WTC11 (cell line): ENCODE measurements at regions of chr10 and their contacts with region 1.

Region 1: GRCh38 chr10:71708301-71708703 is 11.3 kb downstream of the C10orf105 start:
- DNase-seq: peak; percentile 92
- ATAC-seq: peak; percentile 94
- H3K4me3 Mint-ChIP-seq: no peak overlapping the region; the same call in 1 of the 2 replicates
- H3K27ac Mint-ChIP-seq: no peak overlapping the region
- H3K4me1 Mint-ChIP-seq: peaks cover 4% of the 10 kb centered on the region
- H3K27me3 Mint-ChIP-seq: no peaks in the 10 kb centered on the region; the same call in 1 of the 2 replicates
- CTCF ChIP-seq: peak; percentile 84

Region 2: DNA sequence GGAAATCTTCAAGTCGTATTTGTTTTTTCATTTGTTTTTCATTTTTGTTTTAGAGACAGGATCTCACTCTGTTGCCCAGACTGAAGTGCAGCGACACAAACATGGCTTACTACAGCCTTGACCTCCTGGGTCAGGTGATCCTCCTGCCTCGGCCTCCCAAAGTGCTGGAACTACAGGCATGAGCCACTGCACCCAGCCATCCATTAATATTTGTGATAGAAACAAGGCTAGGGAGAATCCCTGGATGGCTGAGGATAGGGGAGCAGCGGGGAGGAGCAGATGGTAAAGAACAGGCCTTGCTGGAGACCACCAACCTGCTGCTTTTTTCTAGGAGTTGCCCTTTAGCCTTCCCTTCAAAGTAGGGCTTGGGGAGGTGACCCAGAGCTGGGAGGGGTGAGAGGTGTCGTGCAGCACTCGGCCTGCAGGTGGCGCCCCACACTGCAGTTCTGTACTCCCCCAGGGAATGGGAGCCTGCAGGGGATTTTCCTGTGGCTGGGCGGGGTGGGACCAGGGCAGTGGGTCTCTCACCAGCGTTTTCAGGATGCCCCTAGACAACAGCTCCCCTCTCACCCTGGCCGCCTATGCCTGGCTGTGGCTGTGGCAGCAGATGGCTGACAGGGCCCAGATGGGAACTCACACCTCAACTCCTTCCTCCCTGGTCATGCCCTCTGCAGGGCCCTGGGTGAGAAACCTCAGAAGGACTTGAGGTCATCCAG is 324.2 kb before region 1 on chr10:
- CTCF ChIA-PET with region 1: interaction called, 19 read pairs
- POLR2A ChIA-PET with region 1: no interaction called
- DNase-seq: peak; percentile 93
- ATAC-seq: peak; percentile 97
- H3K4me3 Mint-ChIP-seq: no peak overlapping the region
- H3K27ac Mint-ChIP-seq: no peak overlapping the region
- H3K4me1 Mint-ChIP-seq: no peaks in the 10 kb centered on the region
- H3K27me3 Mint-ChIP-seq: no peaks in the 10 kb centered on the region
- CTCF ChIP-seq: peak; percentile 96

Region 3: GRCh38 chr10:71486484-71487114 is 221.7 kb before region 1 on chr10:
- CTCF ChIA-PET with region 1: interaction called, 24 read pairs
- POLR2A ChIA-PET with region 1: no interaction called
- DNase-seq: peak; percentile 90
- ATAC-seq: peak; percentile 93
- H3K4me3 Mint-ChIP-seq: no peak overlapping the region
- H3K27ac Mint-ChIP-seq: no peak overlapping the region
- H3K4me1 Mint-ChIP-seq: peaks cover 3% of the 10 kb centered on the region; the same call in 1 of the 2 replicates
- H3K27me3 Mint-ChIP-seq: peaks cover 11% of the 10 kb centered on the region
- CTCF ChIP-seq: peak; percentile 82

Region 4: GRCh38 chr10:71623098-71623985 is 85.0 kb before region 1 on chr10:
- CTCF ChIA-PET with region 1: interaction called, 28 read pairs
- POLR2A ChIA-PET with region 1: no interaction called
- DNase-seq: peak; percentile 45
- ATAC-seq: peak; percentile 40
- H3K4me3 Mint-ChIP-seq: peak overlapping the region; percentile 58
- H3K27ac Mint-ChIP-seq: peak overlapping the region; percentile 67
- H3K4me1 Mint-ChIP-seq: peaks cover 71% of the 10 kb centered on the region
- H3K27me3 Mint-ChIP-seq: peaks cover 1% of the 10 kb centered on the region
- CTCF ChIP-seq: no peak

Region 5: GRCh38 chr10:71719042-71719441 is 10.7 kb after region 1 on chr10:
- CTCF ChIA-PET with region 1: interaction called, 26 read pairs
- POLR2A ChIA-PET with region 1: no interaction called
- DNase-seq: no peak
- ATAC-seq: no peak
- H3K4me3 Mint-ChIP-seq: no peak overlapping the region
- H3K27ac Mint-ChIP-seq: no peak overlapping the region
- H3K4me1 Mint-ChIP-seq: peaks cover 10% of the 10 kb centered on the region
- H3K27me3 Mint-ChIP-seq: peaks cover 3% of the 10 kb centered on the region; the same call in 1 of the 2 replicates
- CTCF ChIP-seq: no peak

Region 6: DNA sequence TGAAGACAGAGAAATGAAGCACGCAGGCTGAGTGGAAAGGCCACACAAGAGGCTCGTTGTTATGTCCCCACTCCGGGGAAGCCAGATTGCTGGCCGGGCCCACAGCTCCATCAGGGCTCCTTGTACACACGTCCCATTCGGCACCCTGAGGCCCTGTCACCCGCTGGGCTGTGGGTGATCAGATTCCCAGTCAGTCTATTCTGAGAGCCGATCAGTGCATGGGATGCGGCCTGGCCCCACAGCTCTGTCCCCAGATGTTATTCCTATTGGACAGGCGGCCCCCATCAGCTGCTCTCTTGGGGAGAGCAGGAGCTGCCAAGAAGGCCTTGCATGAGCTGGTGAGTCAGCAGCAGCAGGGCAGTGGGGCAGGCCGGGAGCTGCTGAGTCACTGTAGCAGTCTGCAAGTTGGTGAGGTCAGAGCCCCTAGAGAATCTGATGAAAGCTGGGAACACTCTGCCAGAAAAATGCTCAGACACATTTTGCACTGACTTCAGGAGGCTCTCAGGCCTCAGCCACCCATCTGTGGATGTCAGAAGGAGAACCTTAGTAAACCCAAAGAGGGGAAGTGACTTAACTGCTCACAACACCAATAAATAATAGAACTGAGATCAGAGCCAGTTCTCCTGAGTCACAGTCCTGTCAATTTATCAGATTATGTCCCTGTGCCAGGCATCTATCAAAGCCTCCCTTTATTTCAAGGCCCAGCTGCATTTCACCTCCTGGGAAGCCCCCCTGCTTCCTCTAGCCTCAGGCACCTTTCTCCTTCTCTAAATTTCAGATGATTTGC is 152.1 kb after region 1 on chr10:
- CTCF ChIA-PET with region 1: no interaction called
- POLR2A ChIA-PET with region 1: no interaction called
- DNase-seq: peak; percentile 71
- ATAC-seq: peak; percentile 95
- H3K4me3 Mint-ChIP-seq: no peak overlapping the region
- H3K27ac Mint-ChIP-seq: peak overlapping the region; percentile 93; the same call in 1 of the 2 replicates
- H3K4me1 Mint-ChIP-seq: peaks cover 14% of the 10 kb centered on the region
- H3K27me3 Mint-ChIP-seq: no peaks in the 10 kb centered on the region
- CTCF ChIP-seq: no peak

Region 7: DNA sequence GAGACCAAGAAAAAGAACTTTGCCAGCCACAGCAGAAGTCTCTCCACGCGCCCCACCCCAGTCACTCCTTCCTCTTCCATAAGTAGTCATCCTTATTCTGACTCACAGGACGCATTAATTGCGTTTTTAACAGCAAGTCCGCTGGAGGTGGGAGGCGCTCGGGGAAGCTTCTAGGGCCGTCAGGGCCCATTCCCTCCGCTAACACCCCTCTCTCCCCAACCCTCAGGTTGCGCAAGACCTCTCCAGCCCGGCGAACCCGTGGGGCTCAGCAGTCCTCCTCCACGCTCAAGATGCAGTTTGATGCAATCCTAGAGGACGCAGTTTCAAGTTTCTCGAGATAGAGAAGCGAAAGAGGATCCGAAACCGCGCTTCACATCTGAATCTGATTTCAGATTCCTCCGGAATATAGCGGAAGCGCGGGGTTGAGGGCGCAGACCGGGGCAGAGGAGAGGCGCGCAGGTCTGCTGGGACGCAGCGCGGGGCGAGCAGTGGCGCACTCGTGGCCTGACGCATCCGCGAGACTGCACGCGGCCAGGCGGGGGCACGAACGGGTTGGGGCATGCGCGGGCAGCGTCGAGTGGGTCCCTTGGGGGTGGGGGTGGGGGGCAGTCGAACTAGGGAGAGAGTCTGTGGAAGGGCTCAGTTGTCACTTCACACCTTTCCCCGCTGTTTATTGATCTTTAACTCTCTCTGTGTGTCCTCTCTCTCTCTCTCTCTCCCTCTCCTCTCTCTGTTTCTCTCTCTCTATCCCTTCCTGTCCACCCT is 180.5 kb after region 1 on chr10:
- CTCF ChIA-PET with region 1: no interaction called
- POLR2A ChIA-PET with region 1: no interaction called
- DNase-seq: peak; percentile 56
- ATAC-seq: peak; percentile 83
- H3K4me3 Mint-ChIP-seq: peak overlapping the region; percentile 73
- H3K27ac Mint-ChIP-seq: no peak overlapping the region
- H3K4me1 Mint-ChIP-seq: peaks cover 9% of the 10 kb centered on the region
- H3K27me3 Mint-ChIP-seq: peaks cover 44% of the 10 kb centered on the region
- CTCF ChIP-seq: no peak